Left colon (tissue), 2 donors: ENCODE measurements at regions of chr2 and their contacts with region 1.

Region 1: GRCh38 chr2:200901459-200902072 is 12.4 kb downstream of the NIF3L1 start:
- DNase-seq: peak; percentile 52 to 71
- ATAC-seq: peak; percentile 90

Region 2: GRCh38 chr2:200778038-200778437 is 123.5 kb before region 1 on chr2:
- intact Hi-C with region 1: no loop called
- DNase-seq: no peak
- ATAC-seq: no peak

Region 3: GRCh38 chr2:200963124-200963917 is 61.8 kb after region 1 on chr2 and contains the start of gene ORC2:
- intact Hi-C with region 1: no loop called
- DNase-seq: peak; percentile 96 to 97
- ATAC-seq: peak; percentile 91
- total RNA-seq, gene ORC2: 25.5 to 26.8 TPM

Region 4: GRCh38 chr2:201059961-201060755 is 158.6 kb after region 1 on chr2:
- intact Hi-C with region 1: loop called in 1 of 2 experiments (anchors 5 kb)
- DNase-seq: no peak
- ATAC-seq: no peak

Region 5: DNA sequence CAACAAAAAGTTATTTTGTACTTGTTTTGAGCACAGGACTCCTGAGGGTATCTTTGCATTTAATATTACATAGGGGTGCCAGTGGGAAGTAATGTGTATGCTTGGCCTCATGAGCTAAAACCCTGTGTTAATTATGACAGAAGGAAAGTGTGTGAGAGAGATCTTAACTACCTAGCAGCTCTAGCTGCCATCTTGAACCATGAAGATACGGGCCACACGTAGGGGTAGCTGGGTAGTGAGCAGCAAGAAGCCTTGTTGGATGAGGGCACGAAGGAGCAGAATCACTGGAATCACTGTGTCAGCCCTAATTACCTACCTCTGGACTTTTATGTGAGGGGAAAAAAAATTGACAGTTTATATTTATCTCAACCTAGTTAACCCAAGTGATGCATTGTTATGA is 266.0 kb after region 1 on chr2:
- intact Hi-C with region 1: loop called in 1 of 2 experiments (anchors 10 kb)
- DNase-seq: no peak
- ATAC-seq: no peak

Region 6: GRCh38 chr2:201176081-201176481 is 274.5 kb after region 1 on chr2:
- intact Hi-C with region 1: loop called in 1 of 2 experiments (anchors 5 kb)
- DNase-seq: peak in 1 of 2 donors; percentile 62
- ATAC-seq: peak; percentile 62